A673 (cell line): ENCODE measurements at regions of chr2 and their contacts with region 1.

Region 1: DNA sequence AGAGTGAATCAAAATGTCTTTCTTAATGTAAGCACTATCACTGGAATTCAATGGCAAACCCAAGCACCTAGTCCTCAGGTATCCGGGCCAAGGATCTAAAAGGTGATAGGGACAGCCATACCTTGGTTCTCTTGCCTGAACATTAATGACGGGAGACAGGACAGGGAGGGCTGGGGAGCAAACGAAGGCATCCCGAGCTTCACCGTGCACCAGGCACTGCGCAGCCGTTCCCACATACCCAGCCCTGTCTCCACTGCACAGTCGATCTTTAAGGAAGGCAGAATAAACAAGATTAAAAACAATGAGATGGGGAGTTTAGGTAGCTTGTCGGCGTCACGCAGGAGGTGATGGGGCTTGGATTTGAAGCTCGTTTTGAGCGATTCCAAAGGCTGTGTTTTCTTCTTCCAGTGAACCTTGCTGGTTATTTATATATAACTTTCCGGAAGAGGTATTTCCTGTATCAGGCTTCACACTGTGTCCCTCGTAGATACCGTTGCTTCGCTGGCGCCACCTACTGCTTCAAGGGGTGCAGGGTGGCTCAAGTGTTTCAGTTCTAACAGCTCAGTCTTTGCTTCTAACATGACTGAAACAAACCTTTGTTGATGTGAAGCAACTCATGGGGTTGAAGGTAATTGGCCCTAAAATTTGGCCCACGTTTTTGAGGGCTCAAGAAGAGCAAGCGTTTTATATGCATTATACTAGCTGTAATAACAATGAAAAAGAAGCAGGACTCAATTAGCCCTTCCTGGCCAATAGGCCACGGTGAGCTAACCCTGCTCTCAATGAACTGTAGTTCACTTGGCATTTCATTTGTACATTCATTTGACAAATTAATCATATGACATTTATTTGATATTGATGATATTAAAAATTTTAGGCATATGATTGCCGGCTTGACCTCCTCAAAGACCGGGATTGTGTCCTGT is 77.4 kb downstream of the DCDC2C start:
- DNase-seq: peak; percentile 94
- H3K4me3 ChIP-seq: peak overlapping the region; percentile 34
- H3K27ac ChIP-seq: peak overlapping the region; percentile 66
- H3K4me1 ChIP-seq: peaks cover 33% of the 10 kb centered on the region
- H3K27me3 ChIP-seq: no peaks in the 10 kb centered on the region
- CTCF ChIP-seq: peak; percentile 95

Region 2: DNA sequence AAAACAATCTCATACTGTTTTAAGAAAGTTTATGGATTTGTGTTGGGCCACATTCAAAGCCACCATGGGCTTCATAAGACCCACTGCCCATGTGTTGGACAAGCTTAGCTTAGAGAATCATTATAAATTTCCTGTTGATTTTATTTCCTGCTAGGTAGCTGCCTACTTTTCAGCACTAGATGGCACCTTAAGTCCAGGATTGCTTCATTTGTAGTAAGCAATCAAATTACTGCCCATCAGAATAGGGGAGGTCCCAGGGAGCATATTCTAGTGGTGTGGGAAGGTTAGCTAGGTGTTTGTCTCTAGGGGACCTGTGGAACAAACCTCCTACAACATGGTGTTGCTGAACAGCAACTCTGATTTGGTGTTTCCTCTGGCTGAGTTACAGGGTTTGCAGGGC is 88.4 kb before region 1 on chr2:
- CTCF ChIA-PET with region 1: interaction called, 10 read pairs
- POLR2A ChIA-PET with region 1: no interaction called
- intact Hi-C with region 1: no loop called
- DNase-seq: peak; percentile 61
- H3K4me3 ChIP-seq: no peak overlapping the region
- H3K27ac ChIP-seq: no peak overlapping the region
- H3K4me1 ChIP-seq: no peaks in the 10 kb centered on the region
- H3K27me3 ChIP-seq: no peaks in the 10 kb centered on the region
- CTCF ChIP-seq: peak; percentile 73

Region 3: DNA sequence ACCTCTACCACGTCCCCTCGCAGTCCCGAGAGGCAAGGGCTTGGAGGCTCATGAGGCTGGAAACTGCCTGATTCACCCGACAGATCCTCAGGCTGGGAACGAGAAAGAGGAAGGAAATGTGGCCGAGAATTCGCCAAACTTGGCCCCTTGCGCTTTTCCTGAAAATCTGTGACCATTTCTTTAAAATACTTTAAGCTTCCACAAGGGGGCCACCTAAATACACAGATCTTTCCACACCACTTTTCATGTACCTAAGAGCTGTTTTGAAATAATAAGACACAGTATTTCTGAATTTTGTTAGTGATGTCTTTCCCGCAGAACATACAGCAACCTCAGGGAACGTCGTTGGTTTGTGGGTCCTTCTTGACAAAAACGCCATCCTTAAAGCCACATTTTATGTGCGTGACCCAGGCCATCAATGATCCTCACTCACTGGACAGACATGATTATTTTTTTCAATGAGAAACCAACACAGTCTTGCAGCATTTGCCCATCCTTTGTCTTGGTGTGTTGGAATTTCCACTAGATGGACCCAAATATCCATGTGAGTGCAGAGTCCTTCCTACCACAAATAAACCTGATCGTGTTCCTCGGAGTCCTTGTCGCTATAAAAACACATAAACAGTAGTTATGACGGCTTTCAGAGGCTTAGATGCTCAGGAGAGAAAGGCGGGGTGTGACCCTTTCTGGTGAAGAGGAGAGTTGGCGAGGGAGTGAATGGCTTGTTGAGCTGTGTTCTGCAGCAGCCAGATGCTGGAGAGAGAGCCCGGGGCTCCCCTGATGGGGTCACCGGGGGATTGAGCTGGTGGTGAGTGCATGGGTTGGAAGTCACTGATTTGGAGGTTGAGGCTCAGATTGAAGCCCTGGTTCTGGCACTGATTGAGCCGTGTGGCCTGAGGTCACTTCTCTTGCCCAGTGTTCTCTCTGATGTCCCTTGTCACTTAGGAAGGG is 52.4 kb before region 1 on chr2:
- CTCF ChIA-PET with region 1: interaction called, 35 read pairs
- POLR2A ChIA-PET with region 1: no interaction called
- intact Hi-C with region 1: no loop called
- DNase-seq: peak; percentile 83
- H3K4me3 ChIP-seq: peak overlapping the region; percentile 12
- H3K27ac ChIP-seq: no peak overlapping the region
- H3K4me1 ChIP-seq: peaks cover 6% of the 10 kb centered on the region
- H3K27me3 ChIP-seq: no peaks in the 10 kb centered on the region
- CTCF ChIP-seq: peak; percentile 65

Region 4: GRCh38 chr2:3738454-3738853 is 42.3 kb before region 1 on chr2:
- CTCF ChIA-PET with region 1: interaction called, 14 read pairs
- POLR2A ChIA-PET with region 1: no interaction called
- intact Hi-C with region 1: loop called (anchors 2 kb)
- DNase-seq: peak; percentile 85
- H3K4me3 ChIP-seq: no peak overlapping the region
- H3K27ac ChIP-seq: no peak overlapping the region
- H3K4me1 ChIP-seq: peaks cover 18% of the 10 kb centered on the region
- H3K27me3 ChIP-seq: no peaks in the 10 kb centered on the region
- CTCF ChIP-seq: peak; percentile 70

Region 5: DNA sequence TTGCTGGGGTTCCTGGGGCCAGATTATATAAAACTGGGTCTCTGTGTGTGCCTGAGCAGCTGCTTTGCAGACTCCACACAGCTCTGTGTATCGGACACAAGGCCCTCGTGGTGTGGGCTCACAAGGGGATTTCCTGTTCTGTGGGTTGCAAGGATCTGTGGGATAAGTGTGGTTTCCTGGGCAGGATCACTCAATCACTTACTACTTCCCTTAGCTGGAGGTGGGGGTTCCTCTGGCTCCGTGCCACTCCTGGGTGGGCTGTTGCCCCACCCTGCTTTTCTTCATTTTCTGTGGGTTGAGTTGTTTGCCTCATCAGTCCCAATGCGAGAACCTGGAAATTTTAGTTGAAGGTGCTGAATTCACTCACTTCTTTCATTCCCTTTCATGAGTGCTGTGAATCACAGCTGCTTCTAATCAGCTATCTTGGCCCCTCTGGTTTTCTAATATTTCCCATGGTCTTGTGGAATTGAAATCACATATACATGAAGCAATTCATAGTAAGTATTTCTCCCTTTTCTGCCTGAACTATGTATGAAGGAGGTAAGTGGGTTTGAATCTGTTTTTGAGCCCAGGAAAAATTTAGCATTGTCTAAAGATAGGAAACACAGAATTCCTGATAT is 118.9 kb after region 1 on chr2:
- CTCF ChIA-PET with region 1: interaction called, 3 read pairs
- POLR2A ChIA-PET with region 1: interaction called, 10 read pairs
- intact Hi-C with region 1: no loop called
- DNase-seq: peak; percentile 77
- H3K4me3 ChIP-seq: no peak overlapping the region
- H3K27ac ChIP-seq: peak overlapping the region; percentile 37
- H3K4me1 ChIP-seq: peaks cover 14% of the 10 kb centered on the region
- H3K27me3 ChIP-seq: no peaks in the 10 kb centered on the region
- CTCF ChIP-seq: no peak